BJ (cell line): ENCODE measurements at regions of chr4 and their contacts with region 1.

Region 1: GRCh38 chr4:73914071-73914470 is 44.9 kb downstream of the CXCL1 start:
- DNase-seq: no peak
- H3K4me3 ChIP-seq: no peak overlapping the region
- H3K27me3 ChIP-seq: no peaks in the 10 kb centered on the region; the same call in 1 of the 2 replicates
- CTCF ChIP-seq: no peak

Region 2: GRCh38 chr4:73308286-73308685 is 605.8 kb before region 1 on chr4:
- CTCF ChIA-PET with region 1: no interaction called
- POLR2A ChIA-PET with region 1: no interaction called
- DNase-seq: no peak
- H3K4me3 ChIP-seq: no peak overlapping the region
- H3K27me3 ChIP-seq: no peaks in the 10 kb centered on the region
- CTCF ChIP-seq: peak; percentile 44

Region 3: DNA sequence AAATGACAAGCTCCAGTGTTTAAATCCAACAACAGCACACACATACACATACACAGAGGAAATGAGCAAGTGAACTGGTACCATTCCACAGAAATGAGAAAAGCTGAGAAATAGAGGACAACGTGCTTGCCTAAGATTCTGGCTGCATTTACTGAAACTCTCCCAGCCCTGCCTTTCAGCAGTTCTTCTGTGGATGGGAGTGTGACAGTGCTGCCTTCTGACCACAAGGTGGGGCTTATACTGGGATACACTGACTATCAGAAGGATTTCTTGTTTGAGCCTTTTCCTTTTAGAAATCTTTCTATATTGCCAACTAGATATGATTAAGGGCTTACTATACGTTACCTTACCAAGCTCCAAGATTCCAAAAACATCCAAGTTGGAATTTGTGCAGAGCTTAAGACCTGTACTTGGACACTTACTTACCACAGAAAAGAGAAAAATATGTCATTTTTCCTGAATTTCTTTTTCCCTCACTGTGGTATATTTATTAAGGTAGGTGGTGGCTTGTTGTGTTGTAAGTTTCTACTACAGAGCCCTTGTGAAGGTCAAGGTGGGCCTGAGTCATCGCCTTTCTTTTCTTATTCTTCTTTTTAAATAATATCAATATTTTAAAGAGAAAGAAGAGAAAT is 184.4 kb before region 1 on chr4:
- CTCF ChIA-PET with region 1: interaction called, 11 read pairs
- POLR2A ChIA-PET with region 1: no interaction called
- DNase-seq: no peak
- H3K4me3 ChIP-seq: no peak overlapping the region
- H3K27me3 ChIP-seq: no peaks in the 10 kb centered on the region
- CTCF ChIP-seq: peak; percentile 86

Region 4: DNA sequence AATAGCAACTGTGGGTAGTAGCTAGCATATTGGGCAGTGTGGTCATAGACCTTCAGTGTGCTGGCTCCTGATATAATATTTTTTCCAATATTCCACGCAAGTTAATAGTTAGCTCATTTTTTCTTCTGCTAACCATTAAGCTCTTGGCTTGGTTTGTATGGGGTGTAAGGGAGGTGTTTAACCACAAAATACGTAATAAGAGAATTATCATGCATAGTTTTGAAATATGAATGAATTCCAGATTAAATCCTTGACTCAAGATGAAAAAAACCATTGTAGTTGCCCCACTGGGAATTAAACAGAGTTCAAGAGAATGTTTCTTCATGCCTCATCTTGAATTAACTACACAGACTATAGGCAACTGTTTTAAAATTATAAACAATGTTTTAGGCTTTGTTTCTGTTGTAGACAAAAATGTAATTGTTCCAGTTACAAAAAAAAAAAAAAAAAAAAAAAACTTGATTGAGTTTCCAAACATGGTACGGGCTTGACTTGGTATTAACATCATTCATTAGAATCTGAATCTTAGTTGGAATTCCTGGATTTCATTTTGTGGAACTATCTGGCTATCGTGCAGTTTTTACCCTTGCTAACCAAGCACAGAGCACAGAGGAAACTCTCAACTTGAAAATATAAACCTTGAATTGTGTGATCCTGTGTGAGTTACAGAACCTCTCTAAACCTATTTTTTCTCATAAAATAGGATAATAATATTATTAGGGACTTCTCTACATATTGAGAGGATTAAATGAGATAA is 16.5 kb before region 1 on chr4:
- CTCF ChIA-PET with region 1: interaction called, 3 read pairs
- POLR2A ChIA-PET with region 1: interaction called, 14 read pairs
- DNase-seq: no peak
- H3K4me3 ChIP-seq: no peak overlapping the region
- H3K27me3 ChIP-seq: no peaks in the 10 kb centered on the region
- CTCF ChIP-seq: no peak

Region 5: GRCh38 chr4:73944061-73944875 is 30.2 kb after region 1 on chr4:
- CTCF ChIA-PET with region 1: no interaction called
- POLR2A ChIA-PET with region 1: no interaction called
- DNase-seq: no peak
- H3K4me3 ChIP-seq: peak overlapping the region; percentile 38
- H3K27me3 ChIP-seq: peaks cover 20% of the 10 kb centered on the region
- CTCF ChIP-seq: no peak